ENCODE measurements at regions of chr5 and their contacts with region 1.

Region 1: GRCh38 chr5:174311531-174312269 is 266.2 kb downstream of the NSG2 start:
- DNase-seq: peak; percentile 90
- ATAC-seq: peak; percentile 86
- H3K4me3 Mint-ChIP-seq: peak overlapping the region; percentile 51
- H3K27ac Mint-ChIP-seq: no peak overlapping the region
- H3K4me1 Mint-ChIP-seq: peaks cover 11% of the 10 kb centered on the region; the same call in 1 of the 2 replicates
- H3K27me3 Mint-ChIP-seq: peaks cover 22% of the 10 kb centered on the region
- CTCF ChIP-seq: peak; percentile 86

Region 2: DNA sequence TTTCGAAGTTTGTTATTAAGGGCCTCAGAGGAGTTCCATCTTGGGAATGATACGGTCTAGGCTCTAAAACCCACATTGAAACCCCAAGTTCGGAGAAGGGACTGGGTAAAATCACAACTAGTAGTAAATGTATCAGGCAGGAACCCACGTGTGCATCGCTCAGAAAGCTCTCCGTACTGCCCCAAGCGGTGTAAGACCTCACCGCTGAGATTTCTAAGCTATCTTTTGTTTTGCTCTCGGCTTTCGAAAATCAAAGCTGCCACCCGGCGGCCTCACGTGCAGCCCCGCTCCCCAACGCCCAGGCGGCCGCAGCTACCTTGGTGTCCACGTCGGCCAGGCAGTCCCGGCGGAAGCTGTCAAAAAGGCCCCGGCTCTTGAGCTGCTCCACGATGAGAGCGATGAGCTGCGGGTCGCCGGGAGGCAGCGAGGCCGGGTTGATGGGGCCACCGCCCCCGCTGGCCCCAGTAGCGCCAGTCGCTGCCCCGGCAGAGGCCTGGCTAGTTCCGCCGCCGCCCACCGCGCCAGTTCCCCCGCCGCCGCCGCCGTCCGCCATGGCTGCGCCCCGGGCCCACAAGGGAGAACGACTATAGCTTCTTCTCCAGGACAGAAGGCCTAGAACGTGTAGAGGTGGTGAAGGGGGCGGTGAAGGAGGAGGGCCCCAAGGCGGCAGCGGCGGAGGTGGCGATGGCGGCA is 695.7 kb before region 1 on chr5:
- CTCF ChIA-PET with region 1: interaction called, 10 read pairs
- POLR2A ChIA-PET with region 1: no interaction called
- DNase-seq: peak; percentile 64
- ATAC-seq: peak; percentile 29
- H3K4me3 Mint-ChIP-seq: peak overlapping the region; percentile 92
- H3K27ac Mint-ChIP-seq: peak overlapping the region; percentile 86
- H3K4me1 Mint-ChIP-seq: peaks cover 45% of the 10 kb centered on the region
- H3K27me3 Mint-ChIP-seq: no peaks in the 10 kb centered on the region
- CTCF ChIP-seq: no peak

Region 3: DNA sequence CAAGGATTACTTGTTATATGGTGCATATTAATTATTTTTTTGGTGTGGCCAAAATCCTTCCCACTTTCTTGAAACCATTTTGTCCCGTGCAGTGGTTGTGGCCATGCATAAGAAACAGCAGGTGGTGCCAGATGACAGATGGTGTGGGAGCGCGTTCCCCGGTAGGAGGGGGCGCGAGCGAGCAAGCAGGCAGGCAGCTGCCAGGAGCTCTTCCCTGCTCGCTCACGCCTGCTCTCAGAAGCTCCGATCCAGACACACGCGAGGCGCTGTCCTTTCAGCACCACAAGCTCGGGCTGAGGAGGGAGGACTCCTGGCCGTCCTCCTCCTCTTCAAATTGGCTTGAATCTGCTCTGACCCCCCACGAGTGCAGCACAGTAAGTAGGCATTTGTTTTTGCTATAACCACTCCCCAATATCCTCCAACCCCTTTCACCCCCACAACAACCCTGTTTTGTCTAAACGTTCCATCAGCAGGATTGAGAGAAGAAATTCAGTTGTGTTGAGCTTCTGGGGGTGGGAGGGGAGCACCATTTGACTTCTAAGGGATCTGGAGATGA is 266.2 kb before region 1 on chr5 and contains the start of gene NSG2:
- CTCF ChIA-PET with region 1: interaction called, 159 read pairs
- POLR2A ChIA-PET with region 1: interaction called, 8 read pairs
- DNase-seq: peak; percentile 94
- ATAC-seq: peak; percentile 100
- H3K4me3 Mint-ChIP-seq: no peak within 1 kb of the TSS
- H3K27ac Mint-ChIP-seq: no peak within 1 kb of the TSS
- H3K4me1 Mint-ChIP-seq: 0 out of 2 replicates have a peak, but pooled peaks cover 4% of the 10 kb centered on the region
- H3K27me3 Mint-ChIP-seq: peaks cover 6% of the 10 kb centered on the region; the same call in 1 of the 2 replicates
- CTCF ChIP-seq: no peak
- total RNA-seq, gene NSG2: 0.14 TPM in 1 of 3 replicates, not detected in the others

Region 4: DNA sequence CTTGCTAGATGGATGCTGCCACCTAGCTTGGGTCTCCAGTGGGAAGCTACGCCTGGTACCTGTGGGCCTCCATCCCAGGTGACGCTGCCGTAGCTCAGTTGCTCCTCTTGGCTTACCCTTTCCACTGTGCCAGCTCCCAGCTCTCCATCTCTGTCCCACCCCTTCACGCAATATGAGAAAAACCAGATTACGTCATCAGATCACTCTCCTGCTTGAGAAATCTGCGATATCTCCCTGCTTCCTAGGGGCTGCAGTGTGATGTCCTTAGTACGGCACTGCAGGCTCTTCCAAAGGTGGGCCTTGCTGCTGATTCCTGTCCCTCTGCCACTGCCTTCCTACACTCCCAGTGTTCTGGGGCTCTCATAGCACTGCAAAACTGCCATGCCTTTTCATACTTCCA is 237.3 kb before region 1 on chr5:
- CTCF ChIA-PET with region 1: interaction called, 17 read pairs
- POLR2A ChIA-PET with region 1: no interaction called
- DNase-seq: no peak
- ATAC-seq: no peak
- H3K4me3 Mint-ChIP-seq: no peak overlapping the region
- H3K27ac Mint-ChIP-seq: no peak overlapping the region
- H3K4me1 Mint-ChIP-seq: no peaks in the 10 kb centered on the region
- H3K27me3 Mint-ChIP-seq: no peaks in the 10 kb centered on the region
- CTCF ChIP-seq: no peak

Region 5: DNA sequence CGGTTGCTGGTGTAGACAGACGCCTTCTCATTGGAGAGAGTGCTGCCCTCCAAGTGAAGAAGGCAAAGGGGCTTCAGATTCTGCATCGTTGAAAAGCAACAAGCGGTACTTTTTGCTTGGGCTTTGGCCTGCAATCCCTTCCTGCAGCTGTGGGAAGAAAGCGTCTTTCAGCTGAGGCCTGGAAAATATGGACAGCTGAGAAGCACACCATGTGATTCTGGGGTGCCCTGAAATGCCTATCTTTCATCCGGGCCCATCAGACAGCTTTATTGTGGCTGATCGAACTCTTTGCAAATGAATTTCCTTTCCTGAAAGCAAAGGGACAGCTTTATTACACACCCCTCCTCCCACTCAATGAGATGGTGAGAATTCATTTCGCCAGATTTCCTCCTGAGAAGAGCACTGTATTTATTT is 192.2 kb before region 1 on chr5:
- CTCF ChIA-PET with region 1: interaction called, 14 read pairs
- POLR2A ChIA-PET with region 1: no interaction called
- DNase-seq: no peak
- ATAC-seq: no peak; the same call in 1 of the 2 replicates
- H3K4me3 Mint-ChIP-seq: no peak overlapping the region
- H3K27ac Mint-ChIP-seq: no peak overlapping the region
- H3K4me1 Mint-ChIP-seq: peaks cover 10% of the 10 kb centered on the region
- H3K27me3 Mint-ChIP-seq: no peaks in the 10 kb centered on the region; the same call in 1 of the 2 replicates
- CTCF ChIP-seq: no peak

Region 6: DNA sequence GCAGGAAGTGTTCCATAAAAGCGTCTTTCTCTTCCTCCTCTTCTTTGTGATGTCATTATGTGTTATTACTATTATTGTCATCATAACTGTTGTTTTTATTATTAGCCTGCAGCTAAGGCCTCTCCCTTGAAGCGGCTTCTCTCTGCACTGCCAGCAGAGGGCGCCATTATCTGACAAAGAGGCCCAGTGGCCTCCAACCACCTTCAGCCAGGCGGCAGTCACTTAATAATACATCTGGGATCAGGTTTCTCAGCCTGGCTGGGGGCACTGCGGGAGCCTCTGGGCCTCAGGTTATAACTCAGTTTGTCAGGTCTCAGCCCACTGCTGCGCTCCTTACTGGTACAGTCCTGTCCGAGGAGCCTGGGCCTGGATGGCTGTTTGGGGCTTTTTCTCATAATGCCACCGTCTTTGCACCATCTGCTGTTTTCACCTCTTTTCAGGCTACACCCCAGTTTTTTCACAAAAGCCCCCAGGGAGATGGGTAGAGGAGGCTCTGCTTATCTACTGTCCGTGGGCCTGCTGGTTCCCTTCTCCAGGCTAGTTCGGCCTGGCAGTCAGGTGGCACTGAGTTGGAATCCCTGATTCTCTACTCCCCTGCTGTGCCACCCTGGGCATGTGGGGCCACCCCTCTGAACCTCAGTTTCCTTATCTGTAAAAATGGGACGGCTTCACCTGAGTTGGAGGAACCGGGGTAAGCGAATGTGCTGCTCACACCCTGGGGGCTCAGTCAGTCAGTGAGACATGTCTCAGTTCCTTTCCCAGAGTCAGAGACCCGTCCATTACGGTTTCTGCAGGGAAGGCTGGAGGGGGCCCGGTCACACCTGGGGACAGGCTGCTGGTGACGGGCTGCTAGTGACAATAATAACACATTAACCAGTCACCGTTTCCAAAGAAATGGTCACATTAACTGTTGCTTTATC is 15.9 kb after region 1 on chr5:
- CTCF ChIA-PET with region 1: interaction called, 16 read pairs
- POLR2A ChIA-PET with region 1: no interaction called
- DNase-seq: peak; percentile 92
- ATAC-seq: peak; percentile 92
- H3K4me3 Mint-ChIP-seq: no peak overlapping the region
- H3K27ac Mint-ChIP-seq: no peak overlapping the region; the same call in 1 of the 2 replicates
- H3K4me1 Mint-ChIP-seq: peaks cover 32% of the 10 kb centered on the region
- H3K27me3 Mint-ChIP-seq: no peaks in the 10 kb centered on the region; the same call in 1 of the 2 replicates
- CTCF ChIP-seq: peak; percentile 79